Activated CD4-positive, alpha-beta T cell treated with anti-CD3 and anti-CD28 coated beads for 36 hours (primary cell): ENCODE measurements at regions of chr3 and their contacts with region 1.

Region 1: GRCh38 chr3:160754855-160755747 is 930 bp upstream of the PPM1L start:
- DNase-seq: peak; percentile 95
- ATAC-seq: peak; percentile 89
- H3K4me3 Mint-ChIP-seq: peak overlapping the region; percentile 90
- H3K27ac Mint-ChIP-seq: peak overlapping the region; percentile 90
- H3K4me1 Mint-ChIP-seq: peaks cover 26% of the 10 kb centered on the region
- H3K27me3 Mint-ChIP-seq: peaks cover 23% of the 10 kb centered on the region

Region 2: GRCh38 chr3:160399125-160400029 is 355.7 kb before region 1 on chr3 and contains the starts of genes IFT80 and SMC4:
- CTCF ChIA-PET with region 1: no interaction called
- POLR2A ChIA-PET with region 1: no interaction called
- intact Hi-C with region 1: loop called (anchors 1 kb)
- DNase-seq: peak; percentile 98
- ATAC-seq: peak; percentile 93
- H3K4me3 Mint-ChIP-seq: peak within 1 kb of the TSS; percentile 91
- H3K27ac Mint-ChIP-seq: peak within 1 kb of the TSS; percentile 96
- H3K4me1 Mint-ChIP-seq: peaks cover 35% of the 10 kb centered on the region
- H3K27me3 Mint-ChIP-seq: peaks cover 7% of the 10 kb centered on the region
- total RNA-seq, gene IFT80: 15.0 to 18.1 TPM
- total RNA-seq, gene SMC4: 176 to 216 TPM

Region 3: GRCh38 chr3:160565442-160566403 is 189.4 kb before region 1 on chr3 and contains the start of gene KPNA4:
- CTCF ChIA-PET with region 1: no interaction called
- POLR2A ChIA-PET with region 1: no interaction called
- intact Hi-C with region 1: loop called (anchors 1 kb)
- DNase-seq: peak; percentile 98
- ATAC-seq: peak; percentile 93
- H3K4me3 Mint-ChIP-seq: peak within 1 kb of the TSS; percentile 95
- H3K27ac Mint-ChIP-seq: peak within 1 kb of the TSS; percentile 96
- H3K4me1 Mint-ChIP-seq: peaks cover 43% of the 10 kb centered on the region
- H3K27me3 Mint-ChIP-seq: no peaks in the 10 kb centered on the region
- total RNA-seq, gene KPNA4: 57.0 to 68.5 TPM

Region 4: DNA sequence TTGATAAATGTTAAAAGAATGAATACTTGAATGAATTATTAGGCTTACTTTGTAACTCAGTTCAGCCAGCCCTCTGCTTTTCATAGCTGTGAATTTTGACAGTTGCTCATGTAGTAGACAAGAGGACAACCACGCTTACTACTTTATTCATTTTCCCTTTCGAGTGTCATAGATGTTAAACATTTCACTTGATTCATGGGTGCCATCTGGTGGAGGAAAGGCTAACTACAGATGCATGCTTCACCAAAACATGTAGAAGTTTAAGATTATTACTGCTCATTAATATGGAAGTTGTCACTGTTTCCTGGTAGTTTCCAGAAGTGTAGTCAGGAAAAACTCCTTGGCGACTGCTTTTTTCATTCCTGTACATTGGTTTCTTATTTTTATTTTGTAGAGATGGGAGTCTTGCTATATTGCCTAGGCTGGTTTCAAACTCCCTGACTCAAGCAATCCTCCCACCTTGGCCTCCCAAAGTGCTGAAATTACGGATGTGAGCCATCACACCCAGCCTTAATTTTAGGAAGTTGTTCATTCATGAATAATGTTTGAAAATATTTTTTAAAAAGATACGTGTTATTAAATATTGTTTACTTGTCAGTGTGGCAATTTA is 186.9 kb after region 1 on chr3:
- CTCF ChIA-PET with region 1: no interaction called
- POLR2A ChIA-PET with region 1: no interaction called
- intact Hi-C with region 1: loop called in 1 of 2 experiments (anchors 5 kb)
- DNase-seq: peak; percentile 82
- ATAC-seq: peak; percentile 66
- H3K4me3 Mint-ChIP-seq: no peak overlapping the region
- H3K27ac Mint-ChIP-seq: no peak overlapping the region
- H3K4me1 Mint-ChIP-seq: peaks cover 2% of the 10 kb centered on the region
- H3K27me3 Mint-ChIP-seq: no peaks in the 10 kb centered on the region

Region 5: GRCh38 chr3:160986069-160986468 is 231.0 kb after region 1 on chr3:
- CTCF ChIA-PET with region 1: no interaction called
- POLR2A ChIA-PET with region 1: no interaction called
- intact Hi-C with region 1: no loop called
- DNase-seq: no peak
- ATAC-seq: no peak
- H3K4me3 Mint-ChIP-seq: no peak overlapping the region
- H3K27ac Mint-ChIP-seq: no peak overlapping the region
- H3K4me1 Mint-ChIP-seq: peaks cover 1% of the 10 kb centered on the region
- H3K27me3 Mint-ChIP-seq: no peaks in the 10 kb centered on the region

Region 6: GRCh38 chr3:161349529-161350278 is 594.6 kb after region 1 on chr3:
- CTCF ChIA-PET with region 1: no interaction called
- POLR2A ChIA-PET with region 1: no interaction called
- intact Hi-C with region 1: loop called in 1 of 2 experiments (anchors 5 kb)
- DNase-seq: peak; percentile 32
- ATAC-seq: peak; percentile 90
- H3K4me3 Mint-ChIP-seq: no peak overlapping the region
- H3K27ac Mint-ChIP-seq: no peak overlapping the region
- H3K4me1 Mint-ChIP-seq: peaks cover 28% of the 10 kb centered on the region
- H3K27me3 Mint-ChIP-seq: peaks cover 8% of the 10 kb centered on the region